ENCODE measurements at regions of chr10 and their contacts with region 1.

Region 1: DNA sequence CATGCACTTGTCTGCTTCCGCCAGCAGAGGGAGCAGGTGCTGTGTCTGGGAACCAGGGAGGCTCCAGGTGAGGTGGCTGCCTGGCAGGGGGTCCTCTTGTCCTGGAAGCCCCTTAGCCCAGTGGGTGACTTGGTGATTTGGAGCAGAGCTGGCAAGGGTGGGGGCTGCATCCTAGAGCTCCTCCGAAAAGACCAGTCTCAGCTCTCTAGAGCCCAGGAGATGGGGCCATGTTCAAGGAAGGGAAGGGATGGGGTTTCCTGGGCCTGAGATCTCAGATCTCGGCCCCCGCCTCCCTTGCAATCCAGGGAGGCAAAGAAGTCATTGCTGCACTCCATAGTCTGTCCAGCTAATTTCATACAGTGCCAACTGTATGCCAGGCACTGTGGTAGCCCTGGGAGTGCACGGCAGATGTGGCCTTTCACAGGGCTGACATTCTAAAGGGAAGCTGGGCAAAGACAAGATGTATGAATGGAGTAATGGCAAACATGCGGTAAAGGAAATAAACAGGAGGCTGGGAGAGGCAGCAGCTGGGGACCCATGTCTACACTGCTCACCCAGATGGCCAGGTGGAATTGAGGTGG is 20.4 kb upstream of the SFRP5 start:
- DNase-seq: peak; percentile 43
- H3K4me3 ChIP-seq: no peak overlapping the region
- H3K27ac ChIP-seq: no peak overlapping the region
- H3K4me1 ChIP-seq: no peaks in the 10 kb centered on the region
- H3K27me3 ChIP-seq: peaks cover 3 to 6% of the 10 kb centered on the region in 2 experiments
- CTCF ChIP-seq: peak; percentile 76 to 93
- POLR2A ChIP-seq: no peak

Region 2: GRCh38 chr10:97780841-97781617 is 11.2 kb before region 1 on chr10:
- CTCF ChIA-PET with region 1: interaction called, 15 read pairs
- POLR2A ChIA-PET with region 1: no interaction called
- dilution Hi-C with region 1: no loop called
- intact Hi-C with region 1: no loop called
- DNase-seq: no peak
- H3K4me3 ChIP-seq: no peak overlapping the region
- H3K27ac ChIP-seq: no peak overlapping the region
- H3K4me1 ChIP-seq: peaks cover 4% of the 10 kb centered on the region
- H3K27me3 ChIP-seq: no peaks in the 10 kb centered on the region
- CTCF ChIP-seq: no peak
- POLR2A ChIP-seq: no peak

Region 3: GRCh38 chr10:97861097-97861750 is 69.0 kb after region 1 on chr10:
- CTCF ChIA-PET with region 1: interaction called, 10 read pairs
- POLR2A ChIA-PET with region 1: no interaction called
- dilution Hi-C with region 1: no loop called
- intact Hi-C with region 1: no loop called
- DNase-seq: no peak
- H3K4me3 ChIP-seq: no peak overlapping the region
- H3K27ac ChIP-seq: no peak overlapping the region
- H3K4me1 ChIP-seq: no peaks in the 10 kb centered on the region
- H3K27me3 ChIP-seq: no peaks in the 10 kb centered on the region
- CTCF ChIP-seq: no peak
- POLR2A ChIP-seq: no peak

Region 4: GRCh38 chr10:97869091-97870042 is 77.1 kb after region 1 on chr10:
- CTCF ChIA-PET with region 1: interaction called, 118 read pairs
- POLR2A ChIA-PET with region 1: no interaction called
- dilution Hi-C with region 1: no loop called
- intact Hi-C with region 1: loop called (anchors 1 kb)
- DNase-seq: peak; percentile 78
- H3K4me3 ChIP-seq: no peak overlapping the region
- H3K27ac ChIP-seq: no peak overlapping the region
- H3K4me1 ChIP-seq: peaks cover 5% of the 10 kb centered on the region
- H3K27me3 ChIP-seq: peaks cover 13 to 15% of the 10 kb centered on the region in 2 experiments
- CTCF ChIP-seq: peak; percentile 73 to 75
- POLR2A ChIP-seq: peak; percentile 38

Region 5: GRCh38 chr10:97875391-97875790 is 83.2 kb after region 1 on chr10:
- CTCF ChIA-PET with region 1: interaction called, 118 read pairs
- POLR2A ChIA-PET with region 1: no interaction called
- dilution Hi-C with region 1: no loop called
- intact Hi-C with region 1: no loop called
- DNase-seq: peak; percentile 85
- H3K4me3 ChIP-seq: no peak overlapping the region
- H3K27ac ChIP-seq: no peak overlapping the region
- H3K4me1 ChIP-seq: no peaks in the 10 kb centered on the region
- H3K27me3 ChIP-seq: peaks cover 13% of the 10 kb centered on the region in 2 experiments
- CTCF ChIP-seq: no peak
- POLR2A ChIP-seq: no peak

Region 6: DNA sequence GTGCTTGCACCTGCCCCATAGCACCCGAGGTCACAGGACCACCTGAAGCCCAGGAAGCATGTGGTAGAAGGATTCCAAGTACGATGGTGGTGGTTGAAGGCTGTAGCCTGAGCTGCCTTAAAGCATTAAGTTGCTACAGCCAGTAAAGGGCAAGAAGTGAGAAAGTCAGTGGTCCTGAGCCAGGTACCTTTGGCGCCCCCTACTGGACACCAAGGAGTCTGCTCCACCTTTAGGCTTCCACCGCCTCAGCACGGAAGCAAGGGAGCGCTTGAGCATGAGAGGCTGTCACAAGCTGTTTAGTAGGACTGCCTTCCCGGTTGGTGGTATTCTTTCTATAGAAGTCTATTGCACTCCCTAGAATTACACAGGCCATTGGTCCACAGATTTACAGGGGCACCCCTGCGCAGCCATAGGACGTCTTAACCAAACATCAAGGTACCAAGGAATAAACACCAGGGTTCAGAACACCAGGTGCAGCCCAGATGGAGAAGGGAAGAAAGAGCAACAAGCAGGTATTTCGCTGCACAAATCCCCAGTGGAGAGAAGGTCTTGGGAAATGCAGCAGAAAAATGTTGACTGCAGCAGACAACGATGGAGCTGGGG is 236.0 kb after region 1 on chr10:
- CTCF ChIA-PET with region 1: interaction called, 10 read pairs
- POLR2A ChIA-PET with region 1: no interaction called
- dilution Hi-C with region 1: no loop called
- intact Hi-C with region 1: loop called (anchors 5 kb)
- DNase-seq: peak; percentile 37
- H3K4me3 ChIP-seq: no peak overlapping the region
- H3K27ac ChIP-seq: no peak overlapping the region
- H3K4me1 ChIP-seq: no peaks in the 10 kb centered on the region
- H3K27me3 ChIP-seq: peaks cover 41 to 48% of the 10 kb centered on the region in 2 experiments
- CTCF ChIP-seq: peak; percentile 72 to 81
- POLR2A ChIP-seq: no peak

Region 7: GRCh38 chr10:98790802-98791201 is 998.6 kb after region 1 on chr10:
- CTCF ChIA-PET with region 1: no interaction called
- POLR2A ChIA-PET with region 1: no interaction called
- dilution Hi-C with region 1: no loop called
- intact Hi-C with region 1: no loop called
- DNase-seq: no peak
- H3K4me3 ChIP-seq: no peak overlapping the region
- H3K27ac ChIP-seq: no peak overlapping the region
- H3K4me1 ChIP-seq: no peaks in the 10 kb centered on the region
- H3K27me3 ChIP-seq: no peaks in the 10 kb centered on the region
- CTCF ChIP-seq: no peak
- POLR2A ChIP-seq: no peak

Measured in endothelial cell of umbilical vein (primary cell).